H1 (cell line): ENCODE measurements at regions of chr15 and their contacts with region 1.

Region 1: GRCh38 chr15:27059610-27060202 is 88.7 kb downstream of the GABRG3 start:
- DNase-seq: peak; percentile 13 to 86
- H3K4me3 ChIP-seq: no peak overlapping the region
- H3K27ac ChIP-seq: no peak overlapping the region
- H3K4me1 ChIP-seq: no peaks in the 10 kb centered on the region
- H3K27me3 ChIP-seq: no peaks in the 10 kb centered on the region
- CTCF ChIP-seq: peak; percentile 29 to 83 (median 56)
- EP300 ChIP-seq: no peak
- POLR2A ChIP-seq: no peak
- RAD21 ChIP-seq: peak; percentile 57 to 70

Region 2: GRCh38 chr15:27025481-27025966 is 34.2 kb before region 1 on chr15:
- CTCF ChIA-PET with region 1: no interaction called
- POLR2A ChIA-PET with region 1: no interaction called
- DNase-seq: no peak
- H3K4me3 ChIP-seq: no peak overlapping the region
- H3K27ac ChIP-seq: no peak overlapping the region
- H3K4me1 ChIP-seq: peaks cover 0 to 12% (median 5%) of the 10 kb centered on the region in 4 experiments; a peak in 4 of 7 replicates
- H3K27me3 ChIP-seq: no peaks in the 10 kb centered on the region
- CTCF ChIP-seq: no peak
- EP300 ChIP-seq: no peak
- POLR2A ChIP-seq: no peak
- RAD21 ChIP-seq: no peak

Region 3: GRCh38 chr15:27043770-27044169 is 15.9 kb before region 1 on chr15:
- CTCF ChIA-PET with region 1: interaction called, 39 read pairs
- POLR2A ChIA-PET with region 1: no interaction called
- DNase-seq: no peak
- H3K4me3 ChIP-seq: no peak overlapping the region
- H3K27ac ChIP-seq: no peak overlapping the region
- H3K4me1 ChIP-seq: no peaks in the 10 kb centered on the region
- H3K27me3 ChIP-seq: no peaks in the 10 kb centered on the region
- CTCF ChIP-seq: no peak
- EP300 ChIP-seq: no peak
- POLR2A ChIP-seq: no peak
- RAD21 ChIP-seq: no peak